ENCODE measurements at regions of chr2 and their contacts with region 1.

Region 1: DNA sequence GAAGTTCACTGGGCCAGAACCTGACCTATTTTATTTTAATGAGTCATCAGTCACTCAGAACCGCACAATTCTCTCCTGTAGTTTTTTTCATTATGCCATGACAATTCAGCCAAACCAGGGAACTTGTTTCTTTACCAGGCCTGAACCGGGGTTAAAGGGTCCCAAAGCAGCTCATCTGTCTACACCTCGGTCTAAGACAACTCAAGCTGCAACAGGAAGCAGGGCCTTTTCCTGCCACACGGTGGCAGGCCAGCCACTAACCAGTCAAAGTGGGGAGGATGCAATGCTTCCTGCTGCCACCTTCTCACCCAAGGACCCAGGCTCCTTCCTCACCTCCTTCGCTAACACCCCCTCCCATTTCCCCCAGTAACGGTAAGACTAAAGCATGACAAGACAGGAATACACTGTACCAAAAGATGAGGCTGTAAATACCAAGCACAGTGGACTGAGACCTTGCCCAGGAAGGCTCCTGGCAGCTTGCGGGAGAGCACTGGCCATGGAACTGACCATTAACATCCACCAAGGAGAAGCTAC is 56.7 kb upstream of the ACKR3 start:
- DNase-seq: peak; percentile 44 to 74 (median 63)
- ATAC-seq: peak; percentile 94
- H3K4me3 ChIP-seq: no peak overlapping the region
- H3K4me3 Mint-ChIP-seq: no peak overlapping the region
- H3K27ac ChIP-seq: no peak overlapping the region
- H3K27ac Mint-ChIP-seq: no peak overlapping the region
- H3K4me1 ChIP-seq: peaks cover 4% of the 10 kb centered on the region in 2 donors
- H3K4me1 Mint-ChIP-seq: peaks cover 0 to 5% (median 0%) of the 10 kb centered on the region in 7 donors
- H3K27me3 ChIP-seq: no peaks in the 10 kb centered on the region
- H3K27me3 Mint-ChIP-seq: peaks cover 0 to 36% (median 0%) of the 10 kb centered on the region in 5 donors

Region 2: DNA sequence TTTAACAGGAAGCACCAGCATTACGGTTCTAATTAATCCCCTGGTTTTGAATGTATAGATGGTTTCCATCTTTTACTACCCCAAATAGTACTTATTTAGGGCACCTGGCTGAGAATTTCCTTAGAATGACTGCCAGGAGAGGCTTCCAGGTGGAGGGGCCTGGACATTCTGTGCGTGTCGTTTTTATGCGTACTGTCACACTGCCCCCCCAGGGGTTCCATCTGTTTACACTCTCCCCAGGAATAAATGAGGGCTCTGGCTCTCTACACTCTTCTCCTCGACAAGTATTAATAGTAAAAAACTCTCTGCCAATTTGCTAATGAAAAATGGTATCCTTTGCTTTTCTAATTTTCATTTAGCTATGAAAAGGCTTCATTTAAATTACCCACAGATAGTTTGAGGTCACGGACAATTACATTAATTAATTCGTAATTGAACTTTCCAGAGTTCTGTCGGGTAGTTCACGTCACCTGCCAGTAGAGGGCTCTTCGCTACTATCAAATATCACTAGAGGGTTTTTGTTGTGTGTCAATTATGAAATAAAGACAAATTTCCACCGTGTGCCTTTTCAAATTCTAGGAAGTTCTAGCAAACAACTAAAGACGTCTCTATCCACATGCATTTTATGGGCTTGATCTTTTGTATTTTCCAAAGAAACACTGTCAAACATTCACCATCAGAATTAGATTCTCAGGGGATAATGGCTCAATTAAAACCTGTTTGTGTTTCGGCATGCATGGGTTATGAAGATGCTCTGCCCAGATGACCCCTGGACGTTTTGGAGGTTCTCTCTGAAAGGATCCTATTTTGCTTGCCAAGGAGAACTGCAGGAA is 160.0 kb before region 1 on chr2:
- CTCF ChIA-PET with region 1: interaction called, 7 read pairs
- POLR2A ChIA-PET with region 1: interaction called, 3 read pairs
- intact Hi-C with region 1: loop called (anchors 1 kb)
- DNase-seq: peak in 5 of 9 donors; percentile 29 to 48 (median 45)
- ATAC-seq: peak; percentile 50
- H3K4me3 ChIP-seq: no peak overlapping the region
- H3K4me3 Mint-ChIP-seq: no peak overlapping the region
- H3K27ac ChIP-seq: no peak overlapping the region
- H3K27ac Mint-ChIP-seq: peak overlapping the region in 1 of 9 donors; percentile 59
- H3K4me1 ChIP-seq: no peaks in the 10 kb centered on the region
- H3K4me1 Mint-ChIP-seq: peaks cover 0 to 7% (median 4%) of the 10 kb centered on the region in 7 donors
- H3K27me3 ChIP-seq: no peaks in the 10 kb centered on the region
- H3K27me3 Mint-ChIP-seq: peaks cover 0 to 14% (median 8%) of the 10 kb centered on the region in 5 donors

Region 3: GRCh38 chr2:236536727-236537398 is 23.9 kb after region 1 on chr2:
- CTCF ChIA-PET with region 1: interaction called, 51 read pairs
- POLR2A ChIA-PET with region 1: interaction called, 5 read pairs
- intact Hi-C with region 1: loop called (anchors 1 to 2 kb)
- DNase-seq: peak; percentile 30 to 73 (median 65)
- ATAC-seq: peak; percentile 92
- H3K4me3 ChIP-seq: peak overlapping the region; percentile 79
- H3K4me3 Mint-ChIP-seq: peak overlapping the region; percentile 92 to 100 (median 98)
- H3K27ac ChIP-seq: peak overlapping the region; percentile 81
- H3K27ac Mint-ChIP-seq: peak overlapping the region; percentile 90 to 99 (median 97)
- H3K4me1 ChIP-seq: peaks cover 20 to 27% of the 10 kb centered on the region in 2 donors
- H3K4me1 Mint-ChIP-seq: peaks cover 43 to 59% (median 55%) of the 10 kb centered on the region in 7 donors
- H3K27me3 ChIP-seq: no peaks in the 10 kb centered on the region
- H3K27me3 Mint-ChIP-seq: peaks cover 0 to 5% (median 0%) of the 10 kb centered on the region in 5 donors

Region 4: GRCh38 chr2:236545814-236546480 is 33.0 kb after region 1 on chr2:
- CTCF ChIA-PET with region 1: interaction called, 13 read pairs
- POLR2A ChIA-PET with region 1: interaction called, 5 read pairs
- intact Hi-C with region 1: loop called (anchors 2 kb)
- DNase-seq: peak in 3 of 9 donors; percentile 23 to 36 (median 32)
- ATAC-seq: peak; percentile 74
- H3K4me3 ChIP-seq: peak overlapping the region; percentile 34
- H3K4me3 Mint-ChIP-seq: peak overlapping the region; percentile 49 to 85 (median 68)
- H3K27ac ChIP-seq: peak overlapping the region; percentile 72
- H3K27ac Mint-ChIP-seq: peak overlapping the region; percentile 77 to 96 (median 92)
- H3K4me1 ChIP-seq: peaks cover 60% of the 10 kb centered on the region in 2 donors
- H3K4me1 Mint-ChIP-seq: peaks cover 71 to 97% (median 95%) of the 10 kb centered on the region in 7 donors
- H3K27me3 ChIP-seq: no peaks in the 10 kb centered on the region
- H3K27me3 Mint-ChIP-seq: no peaks in the 10 kb centered on the region

Region 5: GRCh38 chr2:237026981-237027711 is 514.2 kb after region 1 on chr2:
- CTCF ChIA-PET with region 1: interaction called, 8 read pairs
- POLR2A ChIA-PET with region 1: no interaction called
- intact Hi-C with region 1: loop called (anchors 1 to 2 kb)
- DNase-seq: peak in 8 of 9 donors; percentile 7 to 53 (median 28)
- ATAC-seq: peak; percentile 64
- H3K4me3 ChIP-seq: no peak overlapping the region
- H3K4me3 Mint-ChIP-seq: no peak overlapping the region
- H3K27ac ChIP-seq: no peak overlapping the region
- H3K27ac Mint-ChIP-seq: no peak overlapping the region
- H3K4me1 ChIP-seq: no peaks in the 10 kb centered on the region
- H3K4me1 Mint-ChIP-seq: no peaks in the 10 kb centered on the region
- H3K27me3 ChIP-seq: no peaks in the 10 kb centered on the region
- H3K27me3 Mint-ChIP-seq: peaks cover 0 to 7% (median 0%) of the 10 kb centered on the region in 5 donors

Region 6: GRCh38 chr2:237223201-237223861 is 710.4 kb after region 1 on chr2:
- CTCF ChIA-PET with region 1: no interaction called
- POLR2A ChIA-PET with region 1: no interaction called
- intact Hi-C with region 1: no loop called
- DNase-seq: no peak
- ATAC-seq: no peak
- H3K4me3 ChIP-seq: no peak overlapping the region
- H3K4me3 Mint-ChIP-seq: no peak overlapping the region
- H3K27ac ChIP-seq: no peak overlapping the region
- H3K27ac Mint-ChIP-seq: no peak overlapping the region
- H3K4me1 ChIP-seq: no peaks in the 10 kb centered on the region
- H3K4me1 Mint-ChIP-seq: peaks cover 0 to 16% (median 0%) of the 10 kb centered on the region in 7 donors
- H3K27me3 ChIP-seq: no peaks in the 10 kb centered on the region
- H3K27me3 Mint-ChIP-seq: peaks cover 13 to 24% (median 20%) of the 10 kb centered on the region in 5 donors

Measured in naive thymus-derived CD4-positive, alpha-beta T cell (primary cell).